ENCODE measurements at regions of chr5 and their contacts with region 1.

Region 1: GRCh38 chr5:9375756-9376155 is 170.1 kb downstream of the SEMA5A start:
- DNase-seq: no peak
- H3K4me3 ChIP-seq: no peak overlapping the region
- H3K27ac ChIP-seq: no peak overlapping the region
- H3K4me1 ChIP-seq: no peaks in the 10 kb centered on the region
- H3K27me3 ChIP-seq: no peaks in the 10 kb centered on the region
- CTCF ChIP-seq: no peak
- POLR2A ChIP-seq: no peak

Region 2: DNA sequence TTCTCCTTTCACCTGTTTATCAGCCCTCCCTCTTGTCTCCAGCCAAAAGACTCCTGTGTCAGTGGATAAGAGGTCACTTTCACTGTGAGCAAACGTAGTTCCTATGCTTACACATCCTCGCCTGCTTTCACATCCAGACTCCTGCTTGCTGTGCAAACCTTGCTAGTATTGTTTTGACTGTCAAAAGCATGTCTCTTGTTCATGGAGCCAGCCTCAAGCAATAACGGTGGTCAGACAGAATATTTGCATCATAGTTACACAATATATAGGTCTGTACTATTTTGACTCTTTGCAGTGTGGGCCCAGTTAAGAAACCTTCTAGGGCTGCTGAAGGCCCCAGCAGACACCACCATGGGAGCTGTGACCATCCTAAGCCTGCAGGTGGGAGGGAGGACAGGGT is 249.9 kb before region 1 on chr5:
- intact Hi-C with region 1: no loop called
- DNase-seq: no peak
- H3K4me3 ChIP-seq: no peak overlapping the region
- H3K27ac ChIP-seq: no peak overlapping the region
- H3K4me1 ChIP-seq: no peaks in the 10 kb centered on the region
- H3K27me3 ChIP-seq: no peaks in the 10 kb centered on the region
- CTCF ChIP-seq: no peak
- POLR2A ChIP-seq: no peak

Region 3: GRCh38 chr5:9401786-9402472 is 26.2 kb after region 1 on chr5:
- intact Hi-C with region 1: loop called (anchors 1 kb)
- DNase-seq: no peak
- H3K4me3 ChIP-seq: no peak overlapping the region
- H3K27ac ChIP-seq: no peak overlapping the region
- H3K4me1 ChIP-seq: no peaks in the 10 kb centered on the region
- H3K27me3 ChIP-seq: no peaks in the 10 kb centered on the region
- CTCF ChIP-seq: no peak
- POLR2A ChIP-seq: no peak